Heart left ventricle (tissue), 16 donors: ENCODE measurements at regions of chr10 and their contacts with region 1.

Region 1: DNA sequence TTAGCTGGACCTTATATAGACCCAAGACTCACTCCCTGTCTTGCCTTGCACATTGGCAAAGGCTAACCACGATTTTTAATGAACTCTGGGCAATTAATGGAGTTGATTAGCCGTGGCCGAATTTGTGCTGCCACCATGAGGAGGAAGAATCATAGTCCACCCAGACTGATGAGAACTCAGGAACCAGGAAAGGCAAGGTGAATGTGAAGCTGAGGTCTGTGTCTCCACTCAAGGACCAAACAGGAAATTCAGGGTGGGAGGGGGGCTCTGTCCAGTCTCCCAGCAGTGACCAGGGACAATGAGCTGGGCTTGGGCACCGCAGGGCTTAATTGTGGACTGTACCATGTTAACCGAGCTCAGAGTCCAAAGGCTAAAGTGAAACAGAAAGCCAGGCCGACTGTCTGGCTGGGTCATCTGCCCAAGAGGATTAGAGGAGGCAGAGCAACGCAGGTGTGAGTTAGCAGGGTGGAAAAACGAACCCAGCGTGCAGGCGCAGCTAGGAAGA is 127.0 kb upstream of the JCAD start:
- DNase-seq: peak in 2 of 5 donors; percentile 30 to 38
- ATAC-seq: peak in 3 of 4 donors; percentile 32 to 67 (median 53)
- H3K4me3 ChIP-seq: peak overlapping the region in 9 of 12 donors; percentile 4 to 42 (median 23)
- H3K27ac ChIP-seq: peak overlapping the region; percentile 62 to 95 (median 80)
- H3K4me1 ChIP-seq: peaks cover 0 to 62% (median 14%) of the 10 kb centered on the region in 12 donors
- H3K27me3 ChIP-seq: no peaks in the 10 kb centered on the region
- CTCF ChIP-seq: peak in 10 of 12 donors; percentile 16 to 55 (median 32)
- POLR2A ChIP-seq: no peak

Region 2: GRCh38 chr10:29277296-29277695 is 909.1 kb before region 1 on chr10:
- intact Hi-C with region 1: no loop called
- DNase-seq: no peak
- ATAC-seq: no peak
- H3K4me3 ChIP-seq: no peak overlapping the region
- H3K27ac ChIP-seq: no peak overlapping the region
- H3K4me1 ChIP-seq: no peaks in the 10 kb centered on the region
- H3K27me3 ChIP-seq: no peaks in the 10 kb centered on the region
- CTCF ChIP-seq: no peak
- POLR2A ChIP-seq: no peak

Region 3: DNA sequence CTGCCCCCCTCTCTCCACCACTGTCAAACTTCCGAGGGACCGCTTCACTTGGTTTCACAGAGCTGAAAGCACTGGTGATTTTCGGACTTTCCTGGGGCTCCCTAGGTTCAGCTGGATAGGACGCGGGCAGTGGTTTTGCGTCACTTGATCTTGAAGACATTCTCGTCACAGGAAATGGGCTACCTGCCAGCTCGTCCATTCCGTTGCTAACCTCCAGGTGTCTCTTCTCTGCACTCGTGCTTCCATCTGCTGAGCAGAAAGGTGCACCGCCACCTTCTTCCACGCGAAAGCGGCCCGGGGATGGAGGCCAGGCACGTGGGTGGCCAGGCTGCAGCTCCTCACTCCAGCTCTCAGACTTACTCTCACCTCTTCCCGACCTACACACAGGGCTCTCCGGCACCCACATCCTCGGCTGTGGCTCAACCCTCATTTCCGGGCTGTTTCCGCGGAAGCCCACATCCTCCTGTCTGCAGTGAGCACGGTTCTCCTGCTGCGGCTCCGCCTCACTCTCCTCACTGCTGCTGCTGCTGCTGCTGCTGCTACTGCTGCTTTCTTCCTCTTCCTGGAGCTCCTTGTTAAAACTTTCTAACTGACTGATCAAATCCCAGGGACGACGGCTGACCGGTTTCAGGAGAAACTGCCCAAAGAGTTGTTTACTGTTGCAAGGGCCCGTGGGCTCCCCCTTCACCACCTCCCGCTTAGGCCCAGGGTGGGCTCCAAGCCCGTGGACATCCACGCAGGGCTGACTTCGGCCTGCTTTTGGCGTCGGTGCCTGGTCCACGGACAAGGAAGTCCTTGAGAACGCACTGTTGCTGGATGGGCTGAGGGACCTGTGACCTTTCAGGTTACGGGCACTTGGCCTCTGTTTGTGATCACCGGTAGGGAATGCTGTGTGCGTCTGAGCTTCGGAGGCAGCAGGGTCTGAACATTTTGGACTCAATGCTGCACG is 159.1 kb before region 1 on chr10:
- intact Hi-C with region 1: loop called in 3 of 10 experiments (anchors 5 to 10 kb)
- DNase-seq: peak; percentile 58 to 80 (median 67)
- ATAC-seq: peak; percentile 27 to 79 (median 61)
- H3K4me3 ChIP-seq: peak overlapping the region in 3 of 12 donors; percentile 6 to 35 (median 10)
- H3K27ac ChIP-seq: peak overlapping the region; percentile 56 to 88 (median 77)
- H3K4me1 ChIP-seq: peaks cover 5 to 49% (median 41%) of the 10 kb centered on the region in 12 donors
- H3K27me3 ChIP-seq: peaks cover 0 to 24% (median 0%) of the 10 kb centered on the region in 9 donors
- CTCF ChIP-seq: peak in 7 of 12 donors; percentile 7 to 28 (median 16)
- POLR2A ChIP-seq: no peak

Region 4: GRCh38 chr10:30034433-30035137 is 151.8 kb before region 1 on chr10:
- intact Hi-C with region 1: loop called in 3 of 10 experiments (anchors 5 to 10 kb)
- DNase-seq: no peak
- ATAC-seq: no peak
- H3K4me3 ChIP-seq: no peak overlapping the region
- H3K27ac ChIP-seq: no peak overlapping the region
- H3K4me1 ChIP-seq: peaks cover 3 to 60% (median 35%) of the 10 kb centered on the region in 12 donors
- H3K27me3 ChIP-seq: peaks cover 0 to 64% (median 0%) of the 10 kb centered on the region in 9 donors
- CTCF ChIP-seq: no peak
- POLR2A ChIP-seq: no peak

Region 5: DNA sequence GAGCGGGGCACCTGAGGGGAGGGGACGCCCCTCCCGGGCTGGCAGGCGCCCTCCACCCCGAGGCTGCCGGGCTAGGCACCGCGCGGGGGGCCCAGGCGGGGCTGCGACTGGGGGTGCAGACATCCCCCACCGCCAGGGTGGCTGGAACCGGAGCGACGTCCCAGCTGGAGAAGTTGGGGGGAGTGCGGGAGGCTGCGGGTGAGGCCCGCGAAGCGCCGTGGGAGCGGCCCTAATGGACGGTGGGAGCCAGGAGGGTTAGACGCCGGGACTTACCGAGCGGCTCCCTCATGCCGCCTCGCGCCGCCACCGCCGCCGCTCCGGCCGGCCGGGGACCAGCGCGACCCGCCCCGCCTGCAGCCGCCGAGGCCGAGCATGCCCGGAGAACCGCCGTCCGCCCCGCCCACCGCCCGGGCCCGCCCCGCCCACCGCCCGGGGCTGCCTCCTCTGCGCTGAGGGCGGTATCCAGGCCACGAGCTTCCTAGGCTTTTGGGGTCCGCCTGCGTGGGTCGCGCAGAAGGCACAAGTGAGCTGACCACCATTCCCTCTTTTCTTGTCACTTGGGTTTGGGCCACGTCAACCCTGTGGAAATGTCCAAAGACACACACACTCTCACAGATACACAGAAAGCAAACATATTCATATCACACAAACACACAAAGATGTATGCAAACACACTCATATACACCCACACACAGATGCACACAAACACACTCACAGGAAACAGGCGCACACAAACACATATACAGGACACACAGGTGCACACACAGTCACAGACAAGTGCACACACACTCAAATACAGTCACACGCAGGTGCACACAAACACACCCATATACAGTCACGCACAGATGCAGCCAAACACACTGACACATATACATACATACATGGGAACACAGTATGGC is 127.0 kb before region 1 on chr10 and contains the start of gene JCAD:
- intact Hi-C with region 1: loop called in 4 of 10 experiments (anchors 5 to 10 kb)
- DNase-seq: peak; percentile 82 to 88 (median 85)
- ATAC-seq: peak; percentile 46 to 95 (median 86)
- H3K4me3 ChIP-seq: peak within 1 kb of the TSS; percentile 72 to 97 (median 85)
- H3K27ac ChIP-seq: peak within 1 kb of the TSS; percentile 90 to 98 (median 94)
- H3K4me1 ChIP-seq: peaks cover 0 to 53% (median 20%) of the 10 kb centered on the region in 12 donors
- H3K27me3 ChIP-seq: peaks cover 0 to 42% (median 0%) of the 10 kb centered on the region in 9 donors
- CTCF ChIP-seq: no peak
- POLR2A ChIP-seq: peak in 1 of 2 donors; percentile 79
- total RNA-seq, gene JCAD: 10.4 to 51.7 (median 22.7) TPM

Region 6: DNA sequence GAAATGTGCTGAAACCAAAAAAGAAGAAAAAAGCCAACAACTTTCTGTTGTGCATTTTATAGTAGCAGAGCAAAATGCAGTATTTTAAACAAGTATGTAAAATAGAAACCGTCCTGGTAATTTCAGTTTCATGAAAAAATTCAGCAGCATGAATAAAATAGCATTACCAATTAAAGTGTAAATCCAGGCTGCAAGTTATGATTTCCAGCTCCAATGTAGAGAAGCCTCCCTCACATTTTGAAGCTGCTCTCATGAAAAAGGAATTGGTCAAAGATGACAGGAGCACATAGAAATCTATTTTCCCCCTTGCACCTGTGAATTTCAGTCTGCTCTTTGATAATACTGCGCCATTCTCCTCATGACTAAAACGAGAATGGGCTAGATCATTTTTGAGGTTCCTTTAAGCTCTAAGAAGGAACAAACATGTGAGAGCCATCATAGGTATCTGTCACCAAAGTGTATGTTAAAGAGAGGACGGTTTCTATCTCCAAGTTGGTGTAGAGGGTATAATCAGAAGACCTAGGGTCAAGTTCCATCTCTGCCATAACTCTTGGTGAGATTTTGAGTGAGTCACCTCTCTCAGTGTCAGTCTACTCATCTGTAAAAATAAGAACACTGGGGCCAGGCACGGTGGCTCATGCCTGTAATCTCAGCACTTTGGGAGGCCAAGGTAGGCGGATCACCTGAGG is 55.1 kb after region 1 on chr10:
- intact Hi-C with region 1: loop called in 4 of 10 experiments (anchors 5 kb)
- DNase-seq: no peak
- ATAC-seq: no peak
- H3K4me3 ChIP-seq: no peak overlapping the region
- H3K27ac ChIP-seq: no peak overlapping the region
- H3K4me1 ChIP-seq: peaks cover 0 to 13% (median 0%) of the 10 kb centered on the region in 12 donors
- H3K27me3 ChIP-seq: no peaks in the 10 kb centered on the region
- CTCF ChIP-seq: no peak
- POLR2A ChIP-seq: no peak